Transverse colon (tissue), 4 donors: ENCODE measurements at regions of chr3 and their contacts with region 1.

Region 1: GRCh38 chr3:32684800-32685542 is at the start of gene CNOT10:
- DNase-seq: peak; percentile 97
- H3K4me3 ChIP-seq: peak within 1 kb of the TSS; percentile 60 to 95 (median 84)
- H3K27ac ChIP-seq: peak within 1 kb of the TSS; percentile 88 to 92 (median 91)
- H3K4me1 ChIP-seq: peaks cover 0 to 24% (median 17%) of the 10 kb centered on the region in 4 donors
- H3K27me3 ChIP-seq: no peaks in the 10 kb centered on the region
- CTCF ChIP-seq: peak in 4 of 5 experiments; percentile 10 to 47 (median 28)
- EP300 ChIP-seq: no peak
- POLR2A ChIP-seq: peak; percentile 49
- total RNA-seq, gene CNOT10: 13.8 to 34.6 (median 25.2) TPM

Region 2: DNA sequence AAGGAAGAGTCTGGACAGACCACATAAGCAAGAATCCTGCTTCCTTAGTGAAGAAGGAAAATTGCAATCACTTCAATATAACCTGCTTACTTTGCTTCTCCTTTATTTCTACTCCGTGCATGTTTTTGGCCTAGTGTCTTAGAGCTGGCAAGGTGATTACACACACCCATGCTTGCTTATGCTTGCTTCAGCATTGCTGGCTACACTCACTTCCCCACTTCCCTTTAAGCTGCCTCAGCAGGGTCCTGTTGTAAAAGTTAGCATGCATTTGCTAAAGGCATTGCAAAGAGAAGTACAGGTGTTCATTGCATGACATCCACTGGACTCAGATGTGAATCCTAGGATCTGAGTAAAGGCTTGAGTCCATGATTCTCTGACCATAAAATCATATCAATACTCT is 1199.8 kb before region 1 on chr3:
- in situ Hi-C with region 1: no loop called
- intact Hi-C with region 1: no loop called
- DNase-seq: no peak
- H3K4me3 ChIP-seq: no peak overlapping the region
- H3K27ac ChIP-seq: no peak overlapping the region
- H3K4me1 ChIP-seq: no peaks in the 10 kb centered on the region
- H3K27me3 ChIP-seq: no peaks in the 10 kb centered on the region
- CTCF ChIP-seq: no peak
- EP300 ChIP-seq: no peak
- POLR2A ChIP-seq: no peak

Region 3: GRCh38 chr3:32510075-32510724 is 174.8 kb before region 1 on chr3:
- in situ Hi-C with region 1: loop called in 1 of 4 experiments (anchors 25 kb)
- intact Hi-C with region 1: no loop called
- DNase-seq: peak; percentile 67
- H3K4me3 ChIP-seq: no peak overlapping the region
- H3K27ac ChIP-seq: no peak overlapping the region
- H3K4me1 ChIP-seq: peaks cover 0 to 4% (median 1%) of the 10 kb centered on the region in 4 donors
- H3K27me3 ChIP-seq: no peaks in the 10 kb centered on the region
- CTCF ChIP-seq: peak; percentile 59 to 84 (median 63)
- EP300 ChIP-seq: no peak
- POLR2A ChIP-seq: no peak

Region 4: DNA sequence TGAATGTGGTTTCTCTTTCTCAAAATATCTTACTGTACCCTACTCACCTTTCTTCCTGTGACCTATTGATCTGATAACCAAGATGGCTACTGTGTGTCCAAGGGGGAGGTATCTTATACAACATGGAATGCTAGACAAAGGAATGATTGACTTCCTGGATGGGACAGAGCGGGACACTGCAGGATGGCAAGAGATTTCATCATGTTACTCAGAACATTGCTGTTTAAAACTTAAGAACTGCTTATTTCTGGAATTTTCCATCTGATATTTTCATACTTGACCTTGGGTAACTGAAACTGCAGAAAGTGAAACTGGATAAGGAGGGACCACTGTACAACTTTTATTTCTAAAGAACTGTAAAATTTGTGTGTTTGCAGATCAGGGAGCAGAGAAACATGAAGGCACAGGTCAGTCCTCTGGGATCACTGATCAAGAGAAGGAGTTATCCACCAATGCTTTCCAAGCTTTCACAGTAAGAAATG is 18.6 kb after region 1 on chr3:
- in situ Hi-C with region 1: no loop called
- intact Hi-C with region 1: loop called (anchors 1 kb)
- DNase-seq: no peak
- H3K4me3 ChIP-seq: no peak overlapping the region
- H3K27ac ChIP-seq: no peak overlapping the region
- H3K4me1 ChIP-seq: peaks cover 0 to 25% (median 0%) of the 10 kb centered on the region in 4 donors
- H3K27me3 ChIP-seq: no peaks in the 10 kb centered on the region
- CTCF ChIP-seq: no peak
- EP300 ChIP-seq: no peak
- POLR2A ChIP-seq: no peak